ENCODE measurements at regions of chr3 and their contacts with region 1.

Region 1: GRCh38 chr3:178966299-178967176 is 105.1 kb downstream of the ZMAT3 start:
- DNase-seq: no peak
- H3K4me3 Mint-ChIP-seq: no peak overlapping the region
- H3K27ac Mint-ChIP-seq: no peak overlapping the region
- H3K4me1 Mint-ChIP-seq: peaks cover 13% of the 10 kb centered on the region
- H3K27me3 Mint-ChIP-seq: no peaks in the 10 kb centered on the region

Region 2: GRCh38 chr3:178436773-178437172 is 529.8 kb before region 1 on chr3:
- CTCF ChIA-PET with region 1: interaction called, 3 read pairs
- intact Hi-C with region 1: loop called (anchors 1 kb)
- DNase-seq: no peak
- H3K4me3 Mint-ChIP-seq: no peak overlapping the region
- H3K27ac Mint-ChIP-seq: no peak overlapping the region
- H3K4me1 Mint-ChIP-seq: no peaks in the 10 kb centered on the region
- H3K27me3 Mint-ChIP-seq: no peaks in the 10 kb centered on the region

Region 3: GRCh38 chr3:178623666-178624255 is 342.8 kb before region 1 on chr3:
- CTCF ChIA-PET with region 1: no interaction called
- intact Hi-C with region 1: loop called (anchors 10 kb)
- DNase-seq: no peak
- H3K4me3 Mint-ChIP-seq: no peak overlapping the region
- H3K27ac Mint-ChIP-seq: no peak overlapping the region
- H3K4me1 Mint-ChIP-seq: no peaks in the 10 kb centered on the region
- H3K27me3 Mint-ChIP-seq: no peaks in the 10 kb centered on the region

Region 4: GRCh38 chr3:179071550-179072397 is 105.2 kb after region 1 on chr3 and contains the start of gene ZMAT3:
- CTCF ChIA-PET with region 1: no interaction called
- intact Hi-C with region 1: no loop called
- DNase-seq: peak; percentile 86
- H3K4me3 Mint-ChIP-seq: peak within 1 kb of the TSS; percentile 99
- H3K27ac Mint-ChIP-seq: peak within 1 kb of the TSS; percentile 89
- H3K4me1 Mint-ChIP-seq: peaks cover 42% of the 10 kb centered on the region
- H3K27me3 Mint-ChIP-seq: no peaks in the 10 kb centered on the region
- total RNA-seq, gene ZMAT3: 26.9 to 28.3 TPM